Aorta (tissue), 5 donors: ENCODE measurements at regions of chr15 and their contacts with region 1.

Region 1: DNA sequence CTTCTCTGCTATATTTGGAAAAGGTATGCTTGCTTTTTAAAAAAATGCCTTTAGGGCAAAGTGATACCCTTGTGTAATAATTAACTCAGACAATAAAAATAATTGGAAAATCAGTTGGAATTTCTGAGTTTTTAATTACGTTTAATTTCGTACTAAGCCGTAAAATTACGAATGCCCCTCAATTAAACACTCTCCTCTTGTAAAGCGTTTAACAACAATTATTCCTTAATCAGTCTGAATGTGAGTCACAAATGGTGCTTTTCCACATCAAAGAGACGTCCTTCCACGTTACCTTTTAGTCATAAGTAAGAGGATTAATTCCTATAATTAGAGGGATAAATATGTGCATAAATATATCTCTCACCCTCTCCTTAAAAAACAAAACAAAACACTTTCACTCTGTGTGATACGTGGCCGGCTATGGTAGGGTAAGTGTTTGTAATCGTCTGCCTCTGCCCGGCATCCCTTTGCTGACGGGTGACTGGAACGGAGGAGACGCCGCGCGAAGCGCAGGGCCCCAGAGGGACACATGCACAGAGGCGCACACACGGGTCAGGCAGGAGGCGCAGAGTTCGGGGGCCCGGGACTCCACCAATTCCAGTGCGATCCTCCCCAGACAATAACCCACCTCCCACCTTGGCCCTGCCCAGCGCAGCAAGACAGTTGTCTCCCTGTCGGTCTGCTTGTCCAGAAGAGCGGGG is 9.7 kb upstream of the MEIS2 start:
- DNase-seq: no peak
- ATAC-seq: peak; percentile 34
- H3K4me3 ChIP-seq: peak overlapping the region in 1 of 2 donors; percentile 50
- H3K27ac ChIP-seq: no peak overlapping the region
- H3K4me1 ChIP-seq: no peaks in the 10 kb centered on the region
- H3K27me3 ChIP-seq: no peaks in the 10 kb centered on the region

Region 2: DNA sequence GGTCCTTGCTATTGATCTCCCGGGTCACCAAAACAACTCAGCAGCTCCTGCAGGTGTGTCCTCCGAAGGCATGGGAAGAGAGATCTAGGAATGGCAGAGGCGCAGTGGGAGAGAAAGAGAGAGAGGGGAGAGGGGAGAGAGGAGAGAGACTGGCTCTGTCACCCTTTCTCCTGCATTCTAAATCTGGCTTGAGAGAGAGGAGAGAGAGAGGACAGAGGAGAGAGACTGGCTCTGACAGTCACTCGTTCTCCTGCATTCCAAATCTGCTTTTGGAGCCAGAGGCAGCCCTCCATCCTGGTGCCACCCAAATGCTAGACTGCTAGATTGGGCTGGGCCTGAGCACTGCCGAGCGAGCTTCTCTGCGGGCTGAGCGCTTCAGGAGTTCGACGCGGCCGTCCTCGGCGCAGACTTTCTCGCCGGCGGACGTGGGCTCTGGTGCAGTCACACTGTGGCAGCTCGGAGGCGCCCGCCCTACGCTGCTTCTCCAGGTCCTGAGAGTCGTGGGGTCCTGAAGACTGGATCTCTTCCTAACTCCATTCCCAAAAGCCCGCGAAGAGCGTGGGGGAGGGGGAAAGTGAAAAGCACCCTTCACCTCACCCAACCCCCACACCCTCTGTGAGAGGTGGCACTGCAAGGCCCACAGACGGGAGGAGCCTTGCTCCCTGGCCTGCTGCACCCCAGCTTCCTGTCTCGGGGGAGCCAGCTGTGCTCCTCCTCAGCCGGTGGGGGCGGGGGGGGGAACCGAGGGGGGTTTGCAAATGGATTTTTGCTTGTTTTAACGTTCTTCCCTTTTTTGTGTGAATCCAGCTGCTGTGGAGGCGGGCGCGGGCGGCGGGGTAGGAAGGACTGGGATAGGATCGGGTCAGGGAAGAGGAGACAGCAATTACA is 232.0 kb before region 1 on chr15:
- intact Hi-C with region 1: loop called in 1 of 2 experiments (anchors 5 kb)
- DNase-seq: peak; percentile 45 to 71
- ATAC-seq: peak; percentile 61
- H3K4me3 ChIP-seq: no peak overlapping the region
- H3K27ac ChIP-seq: no peak overlapping the region
- H3K4me1 ChIP-seq: no peaks in the 10 kb centered on the region
- H3K27me3 ChIP-seq: no peaks in the 10 kb centered on the region